ENCODE measurements at regions of chr10 and their contacts with region 1.

Region 1: DNA sequence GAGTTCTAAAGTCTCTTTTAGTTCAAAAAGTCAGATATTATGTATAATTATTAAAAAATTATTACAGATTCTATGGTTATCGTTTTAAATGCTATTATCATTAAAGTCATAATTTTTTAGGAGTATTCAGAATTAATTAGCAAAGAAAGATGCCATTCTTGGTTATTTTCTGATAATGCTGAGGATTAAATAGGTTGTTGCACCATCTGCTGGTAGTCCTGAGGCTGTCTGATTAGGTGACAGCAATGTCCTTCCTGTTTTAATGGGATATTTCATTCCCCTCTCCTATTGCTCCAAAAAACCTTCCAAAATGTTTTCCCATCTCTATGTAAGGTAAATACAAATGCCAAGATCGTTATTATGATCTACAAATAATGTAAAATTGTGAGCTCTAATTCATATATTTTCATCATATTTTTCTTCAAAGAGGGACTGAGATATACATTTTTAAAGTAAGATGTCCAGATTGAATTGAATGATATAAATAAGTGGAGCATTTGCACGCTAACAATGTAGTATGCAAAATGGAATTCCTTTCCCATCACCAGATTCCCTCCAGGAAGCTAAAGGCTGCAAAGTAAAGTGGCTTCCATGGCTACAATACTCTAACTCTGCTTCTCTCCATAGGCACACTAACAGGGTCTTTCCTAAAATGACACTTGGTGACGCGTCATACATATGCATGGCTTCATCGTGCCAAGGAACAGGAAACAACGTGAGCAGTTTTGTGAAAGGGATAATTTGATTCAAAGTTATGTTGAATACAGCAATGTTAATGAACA is 58.8 kb upstream of the AKR1E2 start:
- DNase-seq: peak in 1 of 2 experiments; percentile 18
- H3K4me3 ChIP-seq: no peak overlapping the region
- H3K4me3 Mint-ChIP-seq: no peak overlapping the region
- H3K27ac Mint-ChIP-seq: no peak overlapping the region
- H3K4me1 ChIP-seq: no peaks in the 10 kb centered on the region
- H3K4me1 Mint-ChIP-seq: no peaks in the 10 kb centered on the region
- H3K27me3 ChIP-seq: no peaks in the 10 kb centered on the region
- H3K27me3 Mint-ChIP-seq: peaks cover 8% of the 10 kb centered on the region
- CTCF ChIP-seq: peak; percentile 69 to 74

Region 2: GRCh38 chr10:3197348-3198003 is 1569.7 kb before region 1 on chr10:
- CTCF ChIA-PET with region 1: interaction called, 12 read pairs
- POLR2A ChIA-PET with region 1: no interaction called
- intact Hi-C with region 1: loop called (anchors 1 kb)
- DNase-seq: peak; percentile 89 to 92
- H3K4me3 ChIP-seq: peak overlapping the region; percentile 9
- H3K4me3 Mint-ChIP-seq: peak overlapping the region; percentile 75
- H3K27ac Mint-ChIP-seq: peak overlapping the region; percentile 66
- H3K4me1 ChIP-seq: no peaks in the 10 kb centered on the region
- H3K4me1 Mint-ChIP-seq: peaks cover 9% of the 10 kb centered on the region
- H3K27me3 ChIP-seq: no peaks in the 10 kb centered on the region; the same call in 1 of the 2 replicates
- H3K27me3 Mint-ChIP-seq: peaks cover 6% of the 10 kb centered on the region
- CTCF ChIP-seq: peak; percentile 92 to 99

Region 3: DNA sequence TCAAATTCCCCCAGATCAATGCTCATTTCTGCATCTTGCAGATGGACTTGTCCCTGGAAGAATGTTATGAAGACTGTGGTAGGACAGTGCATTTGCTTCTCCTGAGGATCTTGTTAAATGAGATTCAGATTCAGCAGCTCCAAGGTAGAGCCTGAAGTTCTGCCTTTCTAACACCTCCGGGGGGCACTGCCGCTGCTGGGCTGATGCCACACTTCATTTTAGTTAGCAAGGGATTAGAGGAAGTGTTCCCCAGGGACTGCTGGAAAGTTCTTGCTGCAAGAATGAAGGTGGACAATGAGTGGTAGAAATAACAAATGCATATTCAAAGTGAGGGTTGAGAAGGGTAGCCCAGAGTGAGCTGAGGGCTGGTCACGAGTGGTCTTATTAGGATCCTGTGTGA is 375.5 kb before region 1 on chr10:
- CTCF ChIA-PET with region 1: no interaction called
- POLR2A ChIA-PET with region 1: no interaction called
- intact Hi-C with region 1: loop called (anchors 5 kb)
- DNase-seq: peak in 1 of 2 experiments; percentile 25
- H3K4me3 ChIP-seq: no peak overlapping the region
- H3K4me3 Mint-ChIP-seq: no peak overlapping the region
- H3K27ac Mint-ChIP-seq: no peak overlapping the region
- H3K4me1 ChIP-seq: no peaks in the 10 kb centered on the region
- H3K4me1 Mint-ChIP-seq: no peaks in the 10 kb centered on the region
- H3K27me3 ChIP-seq: no peaks in the 10 kb centered on the region
- H3K27me3 Mint-ChIP-seq: peaks cover 14% of the 10 kb centered on the region
- CTCF ChIP-seq: peak in 1 of 2 experiments; percentile 25

Region 4: DNA sequence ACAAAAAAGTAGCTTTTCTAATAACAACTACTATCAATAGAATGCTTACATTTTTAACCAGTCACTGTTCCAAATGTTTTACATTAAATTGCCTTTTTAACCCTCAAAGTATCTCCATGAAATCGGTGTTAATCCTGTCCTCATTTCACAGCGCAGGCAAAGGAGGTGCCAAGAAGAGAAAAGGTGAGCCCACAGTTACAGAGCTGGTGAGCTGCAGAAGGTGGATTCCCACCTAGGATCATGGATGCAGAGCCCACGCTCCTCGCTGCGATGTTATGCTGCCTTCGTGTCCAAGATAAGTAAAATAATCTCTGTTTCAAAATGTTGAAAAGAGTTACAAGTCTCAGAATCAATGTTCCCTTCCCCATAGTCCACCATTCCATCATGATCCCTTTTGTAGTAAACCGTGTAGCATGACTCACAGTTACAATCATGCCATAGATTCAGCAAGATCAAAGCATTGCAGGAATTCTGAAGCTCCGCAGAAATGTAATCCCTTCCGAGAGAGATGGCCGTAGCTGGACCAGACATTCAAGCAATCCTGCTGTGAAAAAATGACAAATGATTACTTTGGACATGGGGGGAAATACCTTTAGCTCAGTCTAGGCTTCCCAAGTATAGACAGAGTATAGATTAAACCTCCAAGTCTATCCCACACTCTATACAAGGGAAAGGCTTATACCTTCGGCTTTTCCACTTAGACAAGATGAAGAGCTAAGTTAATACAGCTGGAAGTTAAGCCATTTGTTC is 335.9 kb before region 1 on chr10:
- CTCF ChIA-PET with region 1: no interaction called
- POLR2A ChIA-PET with region 1: no interaction called
- intact Hi-C with region 1: no loop called
- DNase-seq: peak; percentile 55 to 59
- H3K4me3 ChIP-seq: no peak overlapping the region
- H3K4me3 Mint-ChIP-seq: peak overlapping the region; percentile 70
- H3K27ac Mint-ChIP-seq: peak overlapping the region; percentile 86
- H3K4me1 ChIP-seq: peaks cover 19% of the 10 kb centered on the region
- H3K4me1 Mint-ChIP-seq: peaks cover 11% of the 10 kb centered on the region
- H3K27me3 ChIP-seq: no peaks in the 10 kb centered on the region
- H3K27me3 Mint-ChIP-seq: peaks cover under 1% of the 10 kb centered on the region
- CTCF ChIP-seq: no peak

Region 5: GRCh38 chr10:4512671-4513240 is 254.5 kb before region 1 on chr10:
- CTCF ChIA-PET with region 1: no interaction called
- POLR2A ChIA-PET with region 1: no interaction called
- intact Hi-C with region 1: loop called (anchors 2 kb)
- DNase-seq: peak; percentile 48 to 58
- H3K4me3 ChIP-seq: no peak overlapping the region
- H3K4me3 Mint-ChIP-seq: no peak overlapping the region
- H3K27ac Mint-ChIP-seq: no peak overlapping the region
- H3K4me1 ChIP-seq: no peaks in the 10 kb centered on the region
- H3K4me1 Mint-ChIP-seq: no peaks in the 10 kb centered on the region
- H3K27me3 ChIP-seq: no peaks in the 10 kb centered on the region
- H3K27me3 Mint-ChIP-seq: peaks cover 16% of the 10 kb centered on the region
- CTCF ChIP-seq: peak; percentile 54 to 73

Region 6: DNA sequence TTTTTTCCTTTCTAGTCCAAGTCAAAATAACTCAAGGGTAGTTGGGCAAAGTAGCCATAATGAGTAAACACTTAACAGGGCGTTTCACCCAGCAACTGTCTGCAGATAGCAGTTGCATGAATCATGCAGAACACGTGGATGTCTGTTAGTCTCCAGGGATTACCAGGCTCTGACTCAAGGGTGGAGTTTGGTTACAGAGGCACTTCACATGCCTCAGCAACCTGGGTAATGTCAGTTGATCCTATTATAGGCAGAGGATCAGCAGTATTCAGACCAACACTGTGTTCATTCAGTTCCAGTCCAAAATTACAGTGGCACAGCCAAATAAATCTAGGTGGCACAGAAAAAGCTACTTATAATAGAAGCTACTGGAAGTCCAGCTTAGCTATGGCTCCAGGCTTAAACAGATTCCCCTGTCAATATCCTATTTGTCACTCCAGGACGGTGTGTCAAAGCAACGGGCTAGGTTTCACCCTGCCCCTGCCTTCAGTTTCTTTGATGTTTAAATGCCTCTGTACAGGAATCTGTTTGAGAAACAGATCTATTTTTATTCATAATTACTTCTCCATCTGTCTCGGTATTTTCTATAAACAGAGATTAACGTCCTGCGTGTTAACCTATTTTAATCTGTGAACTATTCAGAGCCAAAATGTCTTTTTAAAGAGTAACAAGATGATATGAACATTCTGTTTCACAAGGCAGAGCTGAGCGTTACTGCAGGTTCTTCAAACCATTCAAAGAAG is 103.9 kb before region 1 on chr10:
- CTCF ChIA-PET with region 1: no interaction called
- POLR2A ChIA-PET with region 1: no interaction called
- intact Hi-C with region 1: loop called (anchors 5 kb)
- DNase-seq: peak; percentile 79 to 87
- H3K4me3 ChIP-seq: no peak overlapping the region
- H3K4me3 Mint-ChIP-seq: peak overlapping the region; percentile 7
- H3K27ac Mint-ChIP-seq: peak overlapping the region; percentile 84
- H3K4me1 ChIP-seq: peaks cover 27% of the 10 kb centered on the region
- H3K4me1 Mint-ChIP-seq: peaks cover 10% of the 10 kb centered on the region
- H3K27me3 ChIP-seq: no peaks in the 10 kb centered on the region
- H3K27me3 Mint-ChIP-seq: no peaks in the 10 kb centered on the region
- CTCF ChIP-seq: no peak

Region 7: DNA sequence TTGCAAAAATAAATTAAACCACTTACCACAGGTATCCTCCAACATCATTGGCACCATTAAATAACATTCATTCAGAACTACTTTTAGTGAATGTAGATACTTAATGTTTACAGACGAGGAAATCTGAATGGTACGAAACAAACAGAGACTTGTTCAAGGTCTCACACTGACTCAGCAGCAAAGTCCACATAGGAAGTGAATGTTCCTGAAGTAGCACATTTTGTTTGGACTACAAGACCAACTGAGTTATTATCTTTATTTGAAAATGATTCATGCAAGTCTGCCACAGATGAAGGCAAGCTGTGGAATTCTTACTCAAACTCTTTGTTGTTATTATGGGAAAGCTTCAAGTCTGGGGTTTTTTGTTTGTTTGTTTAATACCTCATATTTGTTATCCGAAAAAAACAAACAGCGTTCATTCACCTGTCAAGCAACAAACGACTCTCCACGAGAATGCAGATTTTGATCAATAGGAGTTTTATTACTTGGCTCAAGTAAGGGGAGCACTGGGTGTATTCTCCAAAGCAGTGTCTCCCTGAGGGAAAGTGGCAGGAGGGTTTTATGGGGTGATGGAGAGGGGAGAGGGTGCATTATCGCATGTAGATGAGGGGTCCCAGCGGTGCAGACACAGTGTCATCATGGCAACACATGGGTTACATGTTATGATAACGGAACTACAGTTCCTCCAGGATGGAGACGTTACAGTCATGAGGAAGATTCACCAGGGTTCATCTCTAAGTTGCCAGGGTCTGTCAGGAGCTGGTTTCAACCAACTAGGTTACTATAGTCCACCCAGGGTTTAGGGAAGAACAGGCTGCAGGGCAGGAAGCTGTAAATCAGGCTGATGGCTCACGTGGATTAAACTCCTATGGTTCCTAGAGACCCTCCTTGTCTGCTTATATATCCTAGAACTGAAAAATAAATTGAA is 88.9 kb before region 1 on chr10:
- CTCF ChIA-PET with region 1: no interaction called
- POLR2A ChIA-PET with region 1: no interaction called
- intact Hi-C with region 1: loop called (anchors 5 kb)
- DNase-seq: no peak
- H3K4me3 ChIP-seq: no peak overlapping the region
- H3K4me3 Mint-ChIP-seq: no peak overlapping the region
- H3K27ac Mint-ChIP-seq: no peak overlapping the region
- H3K4me1 ChIP-seq: no peaks in the 10 kb centered on the region
- H3K4me1 Mint-ChIP-seq: no peaks in the 10 kb centered on the region
- H3K27me3 ChIP-seq: no peaks in the 10 kb centered on the region
- H3K27me3 Mint-ChIP-seq: no peaks in the 10 kb centered on the region
- CTCF ChIP-seq: no peak

Region 8: GRCh38 chr10:4867520-4868356 is 100.5 kb after region 1 on chr10:
- CTCF ChIA-PET with region 1: no interaction called
- POLR2A ChIA-PET with region 1: no interaction called
- intact Hi-C with region 1: no loop called
- DNase-seq: no peak
- H3K4me3 ChIP-seq: no peak overlapping the region
- H3K4me3 Mint-ChIP-seq: peak overlapping the region; percentile 15
- H3K27ac Mint-ChIP-seq: peak overlapping the region; percentile 7
- H3K4me1 ChIP-seq: peaks cover 20% of the 10 kb centered on the region
- H3K4me1 Mint-ChIP-seq: peaks cover 27% of the 10 kb centered on the region
- H3K27me3 ChIP-seq: no peaks in the 10 kb centered on the region
- H3K27me3 Mint-ChIP-seq: no peaks in the 10 kb centered on the region
- CTCF ChIP-seq: no peak